Keratinocyte (primary cell): ENCODE measurements at regions of chr17 and their contacts with region 1.

Region 1: DNA sequence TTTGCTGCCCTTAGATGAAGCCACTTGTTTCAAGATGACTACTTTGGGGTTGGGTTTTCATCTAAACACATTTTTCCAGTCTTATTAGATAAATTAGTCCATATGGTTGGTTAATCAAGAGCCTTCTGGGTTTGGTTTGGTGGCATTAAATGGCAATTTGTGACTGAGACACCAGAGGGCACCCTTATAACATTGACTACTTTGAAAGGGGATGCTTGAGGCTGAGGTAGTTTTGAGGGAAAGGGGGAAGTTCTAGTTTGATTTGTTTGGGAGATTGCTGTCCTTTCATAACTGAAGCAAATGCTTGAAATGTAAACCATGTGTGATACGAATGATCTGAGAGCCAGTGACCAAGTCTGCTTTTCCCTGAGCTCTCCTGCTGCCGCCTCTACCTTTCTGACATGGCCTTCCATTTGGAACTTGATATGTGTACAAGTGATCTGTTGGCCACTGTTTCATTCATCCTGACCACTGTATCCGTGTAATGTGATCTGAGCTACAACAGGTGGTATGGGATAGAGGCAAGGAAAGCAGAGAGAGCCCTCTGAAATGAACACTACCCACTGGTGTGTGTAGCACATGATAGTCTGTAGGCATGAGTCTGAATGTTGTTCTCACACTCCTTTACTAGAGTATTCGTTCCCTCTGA is 5.8 kb upstream of the RARA start:
- DNase-seq: no peak
- H3K4me3 ChIP-seq: no peak overlapping the region
- H3K27ac ChIP-seq: no peak overlapping the region
- H3K4me1 ChIP-seq: peaks cover 31% of the 10 kb centered on the region
- H3K27me3 ChIP-seq: no peaks in the 10 kb centered on the region
- CTCF ChIP-seq: peak; percentile 43 to 68 (median 68)

Region 2: DNA sequence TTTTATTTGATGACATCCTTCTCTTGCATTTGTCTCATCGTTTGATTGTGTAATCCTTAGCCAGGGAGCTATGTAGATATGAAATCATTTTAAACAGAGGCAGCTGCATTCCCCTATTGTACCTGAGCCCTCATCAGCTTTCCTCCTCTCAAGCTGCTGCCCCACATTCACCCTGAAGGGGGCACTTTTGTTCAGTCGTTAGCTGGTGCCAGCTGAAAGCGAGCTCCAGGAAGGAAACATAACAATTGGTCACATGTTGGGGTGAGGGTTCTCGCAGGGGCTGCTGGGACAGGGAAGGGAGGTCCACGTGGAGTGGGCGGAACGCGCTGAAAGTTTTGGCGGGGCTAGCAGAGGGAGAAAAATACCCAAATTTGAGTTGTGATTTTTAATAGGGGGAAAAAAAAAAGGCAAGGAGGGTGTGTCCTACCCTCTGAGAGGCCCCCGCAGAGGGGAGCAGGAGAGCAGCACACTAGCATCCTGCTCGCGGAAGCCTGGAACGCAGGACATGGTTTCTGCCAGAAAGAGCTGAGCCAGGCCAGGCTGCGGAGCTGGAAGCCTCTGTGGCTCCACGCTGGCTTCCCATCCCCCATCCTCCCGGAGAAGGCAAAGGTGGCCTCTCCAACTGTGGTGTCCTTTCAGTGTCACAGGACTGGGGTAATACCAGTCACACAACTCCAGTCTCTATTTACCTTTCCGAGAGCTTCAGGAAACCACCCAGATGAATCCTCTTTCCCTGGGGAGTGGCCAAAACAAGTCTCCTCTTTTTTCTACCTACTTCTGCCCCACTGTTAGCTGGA is 189.8 kb before region 1 on chr17:
- dilution Hi-C with region 1: no loop called
- DNase-seq: peak; percentile 82
- H3K4me3 ChIP-seq: peak overlapping the region; percentile 18 to 73 (median 42)
- H3K27ac ChIP-seq: peak overlapping the region; percentile 91
- H3K4me1 ChIP-seq: peaks cover 54% of the 10 kb centered on the region
- H3K27me3 ChIP-seq: no peaks in the 10 kb centered on the region
- CTCF ChIP-seq: peak; percentile 80 to 95 (median 90)

Region 3: DNA sequence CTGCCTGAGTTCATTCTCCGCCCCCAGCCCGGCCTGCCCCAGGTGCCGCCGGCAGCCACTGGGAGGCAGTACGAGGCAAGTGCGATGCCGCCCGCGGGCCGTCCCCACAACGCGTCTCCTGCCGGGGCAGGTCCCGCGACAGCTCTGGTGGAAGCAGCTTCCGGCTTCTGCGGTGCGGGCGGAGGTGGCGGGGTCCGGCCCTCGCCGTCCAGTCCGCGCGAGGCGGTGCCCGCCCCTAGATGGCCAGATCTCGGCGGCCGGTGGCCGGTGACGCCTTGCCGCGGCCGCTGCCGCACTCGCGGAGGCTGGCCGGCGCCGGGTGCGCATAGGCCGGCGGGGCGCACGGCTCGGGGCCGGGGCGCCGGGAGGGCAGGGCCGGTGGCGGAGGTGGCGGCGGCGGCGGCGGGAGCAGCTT is 59.6 kb after region 1 on chr17:
- dilution Hi-C with region 1: loop called (anchors 5 kb)
- DNase-seq: no peak
- H3K4me3 ChIP-seq: peak overlapping the region; percentile 45 to 55 (median 49)
- H3K27ac ChIP-seq: no peak overlapping the region
- H3K4me1 ChIP-seq: peaks cover 3% of the 10 kb centered on the region
- H3K27me3 ChIP-seq: no peaks in the 10 kb centered on the region
- CTCF ChIP-seq: peak; percentile 53 to 95 (median 79)

Region 4: DNA sequence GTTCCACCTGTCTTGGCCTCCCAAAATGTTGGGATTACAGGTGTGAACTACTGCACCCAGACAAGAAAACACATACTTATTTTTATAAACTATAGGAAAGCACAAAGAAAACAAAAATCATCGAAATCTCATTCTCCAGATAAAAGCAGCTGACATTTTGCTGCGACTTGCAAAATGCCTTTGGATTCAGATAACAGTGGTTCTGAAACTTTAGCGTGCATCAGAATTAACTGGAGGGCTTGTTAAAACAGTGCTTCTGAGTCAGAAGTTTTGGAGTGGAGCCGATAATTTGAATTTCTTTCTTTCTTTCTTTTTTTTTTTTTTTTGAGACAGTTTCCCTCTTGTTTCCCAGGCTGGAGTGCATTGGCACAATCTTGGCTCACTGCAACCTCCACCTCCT is 79.1 kb after region 1 on chr17:
- dilution Hi-C with region 1: no loop called
- DNase-seq: no peak
- H3K4me3 ChIP-seq: no peak overlapping the region
- H3K27ac ChIP-seq: no peak overlapping the region
- H3K4me1 ChIP-seq: no peaks in the 10 kb centered on the region
- H3K27me3 ChIP-seq: no peaks in the 10 kb centered on the region
- CTCF ChIP-seq: no peak